Transverse colon (tissue), 4 donors: ENCODE measurements at regions of chr1 and their contacts with region 1.

Region 1: DNA sequence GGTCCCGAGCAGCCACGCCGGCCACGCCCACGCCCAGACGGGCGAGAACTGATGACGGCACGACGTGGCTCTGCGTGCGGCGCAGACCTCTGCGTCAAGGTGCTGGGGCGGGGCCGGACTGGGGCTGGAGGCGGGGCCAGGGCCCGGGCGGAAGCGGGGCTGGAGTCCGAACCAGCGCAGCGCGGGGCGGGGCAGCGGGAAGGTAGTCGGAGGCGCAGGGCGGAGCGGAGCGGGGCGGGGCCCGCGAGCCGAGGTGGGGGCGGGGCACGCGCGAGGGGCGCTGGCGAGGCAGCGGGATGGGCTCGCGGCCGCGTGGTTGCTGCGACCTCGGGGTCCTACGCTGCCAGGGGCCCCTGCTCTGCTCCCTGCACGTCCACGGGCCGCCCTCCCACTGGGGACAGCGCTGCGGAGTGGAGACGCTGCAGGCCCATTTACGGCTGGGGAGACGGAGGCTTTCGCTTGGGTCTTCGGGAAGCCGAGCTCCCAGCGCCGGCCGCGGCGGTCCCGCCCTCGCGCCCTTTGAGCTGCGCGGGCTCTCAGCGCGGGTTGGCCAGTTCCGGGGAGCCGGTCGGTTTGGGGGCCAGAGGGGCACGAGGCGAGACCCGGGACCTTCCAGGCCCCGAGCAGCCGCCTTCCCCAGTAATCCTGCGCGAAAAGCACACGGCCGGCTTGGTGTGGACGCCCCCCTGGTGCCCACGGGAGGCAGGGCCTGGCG is at the start of gene PEX10:
- DNase-seq: peak; percentile 99
- H3K4me3 ChIP-seq: peak within 1 kb of the TSS; percentile 70 to 97 (median 81)
- H3K27ac ChIP-seq: peak within 1 kb of the TSS; percentile 90 to 95 (median 93)
- H3K4me1 ChIP-seq: peaks cover 19 to 44% (median 34%) of the 10 kb centered on the region in 4 donors
- H3K27me3 ChIP-seq: peaks cover 5% of the 10 kb centered on the region
- CTCF ChIP-seq: no peak
- EP300 ChIP-seq: no peak
- POLR2A ChIP-seq: peak; percentile 74
- total RNA-seq, gene PEX10: 16.9 to 28.8 (median 21.3) TPM

Region 2: GRCh38 chr1:1574721-1575537 is 837.7 kb before region 1 on chr1 and contains the start of gene SSU72:
- in situ Hi-C with region 1: no loop called
- intact Hi-C with region 1: no loop called
- DNase-seq: peak; percentile 94
- H3K4me3 ChIP-seq: peak within 1 kb of the TSS; percentile 81 to 96 (median 88)
- H3K27ac ChIP-seq: peak within 1 kb of the TSS; percentile 96 to 99 (median 96)
- H3K4me1 ChIP-seq: peaks cover 13 to 33% (median 29%) of the 10 kb centered on the region in 4 donors
- H3K27me3 ChIP-seq: peaks cover 6% of the 10 kb centered on the region
- CTCF ChIP-seq: no peak
- EP300 ChIP-seq: peak; percentile 10
- POLR2A ChIP-seq: peak; percentile 97
- total RNA-seq, gene SSU72: 95.0 to 162 (median 136) TPM

Region 3: DNA sequence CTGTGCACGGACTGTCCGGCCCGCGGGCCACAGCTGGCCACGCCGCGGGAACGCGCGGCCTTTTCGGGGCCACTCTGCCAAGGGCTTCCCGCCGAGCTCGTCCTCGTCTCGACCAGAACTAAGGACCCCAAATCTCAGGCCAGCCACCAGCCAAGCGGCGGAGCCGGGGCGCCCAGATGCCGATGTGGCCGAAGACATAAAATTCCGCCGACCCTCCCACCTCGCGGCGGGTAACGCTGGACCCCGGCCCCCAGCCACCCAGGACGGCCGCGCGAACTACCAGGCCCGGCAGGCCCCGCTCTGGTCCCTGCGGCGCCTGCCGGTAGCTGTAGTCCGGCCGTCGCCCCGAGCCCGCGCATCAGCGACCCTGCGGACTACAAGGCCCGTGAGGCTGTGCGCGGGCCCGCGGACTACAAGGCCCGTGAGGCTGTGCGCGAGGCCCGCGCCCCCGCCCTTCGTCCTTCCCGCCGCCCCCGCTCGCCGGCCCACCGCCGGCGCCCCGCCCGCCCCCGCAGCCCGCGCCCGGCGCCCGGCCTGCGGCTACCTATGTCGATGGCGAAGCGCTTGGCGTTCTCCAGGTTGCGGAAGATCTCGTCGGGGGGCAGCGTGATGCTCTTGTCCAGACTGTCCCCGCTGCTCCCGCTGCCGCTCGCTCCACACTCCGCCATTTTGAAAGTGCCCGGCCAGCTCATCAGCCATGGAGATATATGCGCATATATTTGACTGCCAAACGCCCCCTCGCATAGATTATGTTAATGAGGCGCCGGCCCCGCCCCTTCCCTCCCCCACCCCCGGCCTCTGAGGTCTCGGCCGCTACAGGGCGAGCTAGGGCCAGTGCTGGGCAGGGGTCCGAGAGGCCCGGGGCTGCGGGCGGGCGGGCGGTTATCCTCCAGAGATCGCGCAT is 113.5 kb after region 1 on chr1 and contains the start of gene PANK4:
- in situ Hi-C with region 1: no loop called
- intact Hi-C with region 1: loop called (anchors 1 kb)
- DNase-seq: peak; percentile 92
- H3K4me3 ChIP-seq: peak within 1 kb of the TSS; percentile 64 to 94 (median 90)
- H3K27ac ChIP-seq: peak within 1 kb of the TSS; percentile 73 to 86 (median 78)
- H3K4me1 ChIP-seq: peaks cover 43 to 65% (median 55%) of the 10 kb centered on the region in 4 donors
- H3K27me3 ChIP-seq: peaks cover 15% of the 10 kb centered on the region
- CTCF ChIP-seq: peak in 2 of 5 experiments; percentile 11 to 41
- EP300 ChIP-seq: no peak
- POLR2A ChIP-seq: peak; percentile 57
- total RNA-seq, gene PANK4: 41.1 to 58.3 (median 47.3) TPM

Region 4: GRCh38 chr1:2545759-2546514 is 133.3 kb after region 1 on chr1:
- in situ Hi-C with region 1: loop called in 2 of 4 experiments (anchors 10 to 25 kb)
- intact Hi-C with region 1: loop called (anchors 5 kb)
- DNase-seq: peak; percentile 95
- H3K4me3 ChIP-seq: peak overlapping the region; percentile 37 to 57 (median 46)
- H3K27ac ChIP-seq: peak overlapping the region; percentile 95 to 96 (median 96)
- H3K4me1 ChIP-seq: peaks cover 23 to 81% (median 65%) of the 10 kb centered on the region in 4 donors
- H3K27me3 ChIP-seq: peaks cover 3% of the 10 kb centered on the region
- CTCF ChIP-seq: no peak
- EP300 ChIP-seq: no peak
- POLR2A ChIP-seq: peak; percentile 63

Region 5: GRCh38 chr1:2556277-2556677 is 143.6 kb after region 1 on chr1 and contains the start of gene TNFRSF14:
- in situ Hi-C with region 1: loop called in 1 of 4 experiments (anchors 25 kb)
- intact Hi-C with region 1: no loop called
- DNase-seq: peak; percentile 73
- H3K4me3 ChIP-seq: peak within 1 kb of the TSS; percentile 59 to 78 (median 66)
- H3K27ac ChIP-seq: peak within 1 kb of the TSS; percentile 93 to 96 (median 94)
- H3K4me1 ChIP-seq: peaks cover 21 to 49% (median 35%) of the 10 kb centered on the region in 4 donors
- H3K27me3 ChIP-seq: no peaks in the 10 kb centered on the region
- CTCF ChIP-seq: peak in 1 of 5 experiments; percentile 13
- EP300 ChIP-seq: no peak
- POLR2A ChIP-seq: peak; percentile 46
- total RNA-seq, gene TNFRSF14: 178 to 758 (median 278) TPM

Region 6: GRCh38 chr1:2642560-2643413 is 230.1 kb after region 1 on chr1:
- in situ Hi-C with region 1: loop called in 2 of 4 experiments (anchors 10 to 25 kb)
- intact Hi-C with region 1: no loop called
- DNase-seq: peak; percentile 94
- H3K4me3 ChIP-seq: peak overlapping the region; percentile 67 to 93 (median 82)
- H3K27ac ChIP-seq: peak overlapping the region; percentile 84 to 91 (median 85)
- H3K4me1 ChIP-seq: peaks cover 11 to 19% (median 17%) of the 10 kb centered on the region in 4 donors
- H3K27me3 ChIP-seq: no peaks in the 10 kb centered on the region
- CTCF ChIP-seq: peak in 1 of 5 experiments; percentile 9
- EP300 ChIP-seq: no peak
- POLR2A ChIP-seq: peak; percentile 80

Region 7: GRCh38 chr1:3017440-3018050 is 604.9 kb after region 1 on chr1:
- in situ Hi-C with region 1: no loop called
- intact Hi-C with region 1: no loop called
- DNase-seq: peak; percentile 4
- H3K4me3 ChIP-seq: no peak overlapping the region
- H3K27ac ChIP-seq: no peak overlapping the region
- H3K4me1 ChIP-seq: peaks cover 0 to 5% (median 0%) of the 10 kb centered on the region in 4 donors
- H3K27me3 ChIP-seq: peaks cover 56% of the 10 kb centered on the region
- CTCF ChIP-seq: no peak
- EP300 ChIP-seq: no peak
- POLR2A ChIP-seq: no peak

Region 8: GRCh38 chr1:3441410-3441847 is 1028.8 kb after region 1 on chr1:
- in situ Hi-C with region 1: no loop called
- intact Hi-C with region 1: no loop called
- DNase-seq: no peak
- H3K4me3 ChIP-seq: no peak overlapping the region
- H3K27ac ChIP-seq: no peak overlapping the region
- H3K4me1 ChIP-seq: no peaks in the 10 kb centered on the region
- H3K27me3 ChIP-seq: peaks cover 24% of the 10 kb centered on the region
- CTCF ChIP-seq: no peak
- EP300 ChIP-seq: no peak
- POLR2A ChIP-seq: no peak